ENCODE measurements at regions of chr1 and their contacts with region 1.

Region 1: DNA sequence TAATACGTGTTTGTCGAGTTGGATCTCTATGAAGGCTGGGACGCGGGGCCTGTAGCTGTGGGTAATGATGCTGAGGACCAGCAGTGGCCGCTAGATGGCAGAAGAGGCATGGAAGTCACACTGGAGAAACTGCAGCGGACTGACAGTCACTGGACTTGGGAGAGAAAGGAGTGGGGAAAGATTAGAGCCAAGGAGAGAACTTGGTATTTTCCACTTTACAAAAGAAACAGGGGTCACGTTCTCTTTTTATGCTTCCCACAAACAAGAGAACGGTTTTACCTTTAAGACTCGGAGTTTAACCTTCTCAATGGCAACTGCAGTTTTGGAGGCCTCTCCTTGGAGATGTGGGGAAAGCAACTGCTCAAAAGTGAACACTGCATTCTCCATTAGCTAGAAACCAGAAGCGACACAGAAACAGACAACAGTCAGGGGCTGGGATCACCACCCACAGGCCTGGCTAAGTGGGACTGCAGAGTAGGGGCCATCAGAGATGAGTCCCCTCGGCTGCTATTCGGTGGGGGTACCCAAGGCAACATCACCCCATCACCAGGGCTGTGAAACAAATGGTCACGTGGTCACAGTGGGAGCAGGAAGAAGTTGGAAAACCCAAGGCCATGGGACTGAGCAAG is 51.1 kb upstream of the EDEM3 start:
- DNase-seq: peak; percentile 84
- H3K4me3 Mint-ChIP-seq: no peak overlapping the region
- H3K27ac Mint-ChIP-seq: no peak overlapping the region
- H3K4me1 Mint-ChIP-seq: peaks cover 5% of the 10 kb centered on the region
- H3K27me3 Mint-ChIP-seq: no peaks in the 10 kb centered on the region

Region 2: GRCh38 chr1:184793967-184794366 is 11.8 kb before region 1 on chr1:
- CTCF ChIA-PET with region 1: interaction called, 16 read pairs
- POLR2A ChIA-PET with region 1: no interaction called
- DNase-seq: no peak
- H3K4me3 Mint-ChIP-seq: no peak overlapping the region
- H3K27ac Mint-ChIP-seq: no peak overlapping the region
- H3K4me1 Mint-ChIP-seq: peaks cover 31% of the 10 kb centered on the region
- H3K27me3 Mint-ChIP-seq: no peaks in the 10 kb centered on the region

Region 3: DNA sequence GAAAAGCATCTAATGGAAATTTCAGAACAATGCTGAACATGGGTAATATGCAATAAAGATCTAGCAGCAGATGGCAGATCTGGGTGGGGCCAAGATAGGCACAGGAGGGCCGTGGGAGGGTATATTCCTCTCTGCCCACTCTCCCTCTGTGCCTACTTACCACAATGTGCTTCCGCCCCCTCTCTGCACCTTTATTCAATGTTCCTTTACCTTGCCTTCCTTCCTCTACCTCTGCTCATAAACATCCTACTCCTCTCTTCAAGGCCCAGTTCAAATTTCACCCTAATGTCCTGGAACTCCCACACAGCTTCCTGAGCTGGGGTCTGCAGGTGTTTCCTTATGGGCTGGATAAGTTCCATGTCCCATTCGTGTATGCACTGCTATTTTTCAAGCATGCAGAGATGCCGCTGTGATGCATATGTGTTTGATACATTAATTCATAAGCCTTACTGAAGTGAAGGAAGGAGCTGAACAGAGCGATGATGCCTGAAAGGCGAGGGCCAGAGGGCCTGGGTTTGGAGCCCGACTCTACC is 14.5 kb after region 1 on chr1:
- CTCF ChIA-PET with region 1: interaction called, 13 read pairs
- POLR2A ChIA-PET with region 1: no interaction called
- DNase-seq: no peak
- H3K4me3 Mint-ChIP-seq: no peak overlapping the region
- H3K27ac Mint-ChIP-seq: no peak overlapping the region
- H3K4me1 Mint-ChIP-seq: peaks cover 4% of the 10 kb centered on the region
- H3K27me3 Mint-ChIP-seq: no peaks in the 10 kb centered on the region

Region 4: GRCh38 chr1:184860985-184861759 is 55.4 kb after region 1 on chr1:
- CTCF ChIA-PET with region 1: no interaction called
- POLR2A ChIA-PET with region 1: no interaction called
- DNase-seq: no peak
- H3K4me3 Mint-ChIP-seq: no peak overlapping the region
- H3K27ac Mint-ChIP-seq: no peak overlapping the region
- H3K4me1 Mint-ChIP-seq: peaks cover 29% of the 10 kb centered on the region
- H3K27me3 Mint-ChIP-seq: no peaks in the 10 kb centered on the region

Region 5: GRCh38 chr1:184892116-184892515 is 86.3 kb after region 1 on chr1:
- CTCF ChIA-PET with region 1: interaction called, 10 read pairs
- POLR2A ChIA-PET with region 1: interaction called, 4 read pairs
- DNase-seq: peak; percentile 42
- H3K4me3 Mint-ChIP-seq: peak overlapping the region; percentile 6
- H3K27ac Mint-ChIP-seq: peak overlapping the region; percentile 82
- H3K4me1 Mint-ChIP-seq: peaks cover 61% of the 10 kb centered on the region
- H3K27me3 Mint-ChIP-seq: no peaks in the 10 kb centered on the region

Region 6: DNA sequence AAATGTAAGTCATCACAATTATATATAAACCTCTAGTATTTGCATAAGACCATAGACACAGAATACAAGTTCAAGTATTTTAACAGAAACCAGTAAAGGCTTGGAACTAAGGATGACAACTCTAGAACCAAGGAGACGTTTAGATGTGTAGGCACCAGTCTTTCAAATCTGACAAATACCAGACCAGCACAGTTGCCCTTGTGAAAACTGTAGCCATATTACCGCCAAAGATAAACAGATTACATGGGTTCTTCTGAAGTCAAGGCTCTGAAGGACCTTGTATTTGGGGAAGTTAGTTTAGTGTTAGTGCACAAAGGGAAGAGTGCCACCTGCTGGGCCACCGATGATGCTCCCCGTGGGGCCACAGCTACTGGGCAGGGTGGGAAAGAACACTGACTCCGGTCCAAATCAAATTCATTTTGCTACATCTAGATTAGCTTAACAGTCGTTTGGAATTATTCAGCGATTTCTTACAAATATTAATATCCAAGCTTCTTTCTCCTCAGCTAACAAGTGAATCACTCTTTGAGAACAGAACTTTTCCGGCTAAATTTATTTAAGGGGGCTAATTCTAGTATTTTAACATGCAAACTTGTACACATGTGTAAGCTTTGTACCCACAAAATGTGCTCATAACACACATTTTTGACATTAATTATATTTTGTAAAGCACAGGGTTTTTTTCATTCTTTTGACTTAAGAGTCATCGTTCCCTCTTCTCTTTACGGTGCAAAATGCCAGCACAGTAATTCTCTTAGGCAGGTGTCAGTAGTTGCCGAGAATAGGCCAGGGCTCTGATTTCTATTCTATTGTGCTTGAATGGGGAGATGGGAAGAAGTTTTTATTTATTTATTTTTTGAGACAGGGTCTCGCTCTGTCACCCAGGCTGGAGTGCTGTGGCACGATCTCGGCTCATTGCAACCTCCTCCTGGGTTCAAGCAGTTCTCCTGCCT is 176.5 kb after region 1 on chr1:
- CTCF ChIA-PET with region 1: interaction called, 158 read pairs
- POLR2A ChIA-PET with region 1: interaction called, 19 read pairs
- DNase-seq: peak; percentile 81
- H3K4me3 Mint-ChIP-seq: no peak overlapping the region
- H3K27ac Mint-ChIP-seq: no peak overlapping the region
- H3K4me1 Mint-ChIP-seq: peaks cover 9% of the 10 kb centered on the region
- H3K27me3 Mint-ChIP-seq: peaks cover 14% of the 10 kb centered on the region

Region 7: GRCh38 chr1:185170291-185170848 is 364.6 kb after region 1 on chr1:
- CTCF ChIA-PET with region 1: interaction called, 14 read pairs
- POLR2A ChIA-PET with region 1: no interaction called
- DNase-seq: peak; percentile 40
- H3K4me3 Mint-ChIP-seq: no peak overlapping the region
- H3K27ac Mint-ChIP-seq: no peak overlapping the region
- H3K4me1 Mint-ChIP-seq: peaks cover 18% of the 10 kb centered on the region
- H3K27me3 Mint-ChIP-seq: no peaks in the 10 kb centered on the region

Measured in activated CD4-positive, alpha-beta memory T cell treated with anti-CD3 and anti-CD28 coated beads, Interleukin-2, amount 10 ng/mL, durations not matched to agents 7 days and 5 days (primary cell).